Endothelial cell of umbilical vein (primary cell): ENCODE measurements at regions of chr2 and their contacts with region 1.

Region 1: GRCh38 chr2:210399440-210400041 is 77.0 kb downstream of the LANCL1 start:
- DNase-seq: peak; percentile 21
- H3K4me3 ChIP-seq: no peak overlapping the region
- H3K27ac ChIP-seq: no peak overlapping the region
- H3K4me1 ChIP-seq: no peaks in the 10 kb centered on the region
- H3K27me3 ChIP-seq: peaks cover 0 to 2% of the 10 kb centered on the region in 2 experiments
- CTCF ChIP-seq: peak in 1 of 2 donors; percentile 21
- POLR2A ChIP-seq: no peak

Region 2: GRCh38 chr2:209977386-209978239 is 421.9 kb before region 1 on chr2:
- CTCF ChIA-PET with region 1: interaction called, 20 read pairs
- POLR2A ChIA-PET with region 1: no interaction called
- dilution Hi-C with region 1: no loop called
- intact Hi-C with region 1: loop called (anchors 1 kb)
- DNase-seq: peak; percentile 60
- H3K4me3 ChIP-seq: no peak overlapping the region
- H3K27ac ChIP-seq: no peak overlapping the region
- H3K4me1 ChIP-seq: no peaks in the 10 kb centered on the region
- H3K27me3 ChIP-seq: peaks cover 2 to 6% of the 10 kb centered on the region in 2 experiments
- CTCF ChIP-seq: peak in 1 of 2 donors; percentile 9
- POLR2A ChIP-seq: no peak

Region 3: GRCh38 chr2:210252699-210253606 is 146.6 kb before region 1 on chr2:
- CTCF ChIA-PET with region 1: interaction called, 22 read pairs
- POLR2A ChIA-PET with region 1: no interaction called
- dilution Hi-C with region 1: no loop called
- intact Hi-C with region 1: loop called (anchors 2 kb)
- DNase-seq: no peak
- H3K4me3 ChIP-seq: no peak overlapping the region
- H3K27ac ChIP-seq: no peak overlapping the region
- H3K4me1 ChIP-seq: no peaks in the 10 kb centered on the region
- H3K27me3 ChIP-seq: no peaks in the 10 kb centered on the region
- CTCF ChIP-seq: no peak
- POLR2A ChIP-seq: no peak

Region 4: DNA sequence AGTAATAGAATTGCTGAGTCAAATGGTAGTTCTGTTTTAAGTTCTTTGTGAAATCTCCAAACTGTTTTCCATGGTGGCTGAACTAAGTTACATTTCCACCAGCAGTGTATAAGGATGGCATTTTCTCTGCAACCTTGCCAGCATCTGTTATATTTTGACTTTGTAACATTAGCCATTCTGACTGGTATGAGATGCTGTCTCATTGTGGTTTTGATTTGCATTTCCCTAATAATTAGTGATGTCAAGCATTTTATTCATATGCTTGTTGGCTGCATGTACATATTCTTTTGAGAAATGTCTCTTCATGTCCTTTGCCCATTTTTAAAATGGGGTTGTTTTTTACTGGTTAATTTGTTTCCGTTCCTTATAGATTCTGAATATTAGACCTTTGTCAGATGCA is 13.1 kb after region 1 on chr2:
- CTCF ChIA-PET with region 1: interaction called, 12 read pairs
- POLR2A ChIA-PET with region 1: no interaction called
- dilution Hi-C with region 1: no loop called
- intact Hi-C with region 1: no loop called
- DNase-seq: no peak
- H3K4me3 ChIP-seq: no peak overlapping the region
- H3K27ac ChIP-seq: no peak overlapping the region
- H3K4me1 ChIP-seq: no peaks in the 10 kb centered on the region
- H3K27me3 ChIP-seq: no peaks in the 10 kb centered on the region
- CTCF ChIP-seq: no peak
- POLR2A ChIP-seq: no peak

Region 5: GRCh38 chr2:210833403-210833802 is 433.9 kb after region 1 on chr2:
- CTCF ChIA-PET with region 1: no interaction called
- POLR2A ChIA-PET with region 1: no interaction called
- dilution Hi-C with region 1: no loop called
- intact Hi-C with region 1: no loop called
- DNase-seq: no peak
- H3K4me3 ChIP-seq: no peak overlapping the region
- H3K27ac ChIP-seq: no peak overlapping the region
- H3K4me1 ChIP-seq: no peaks in the 10 kb centered on the region
- H3K27me3 ChIP-seq: no peaks in the 10 kb centered on the region
- CTCF ChIP-seq: no peak
- POLR2A ChIP-seq: no peak